Uterus (tissue), 4 donors: ENCODE measurements at regions of chr1 and their contacts with region 1.

Region 1: GRCh38 chr1:7752512-7753417 is 18.3 kb upstream of the VAMP3 start:
- DNase-seq: peak; percentile 60 to 70
- H3K4me3 ChIP-seq: peak overlapping the region in 1 of 2 donors; percentile 15
- H3K27ac ChIP-seq: peak overlapping the region in 1 of 2 donors; percentile 46
- H3K4me1 ChIP-seq: no peaks in the 10 kb centered on the region
- H3K27me3 ChIP-seq: no peaks in the 10 kb centered on the region
- CTCF ChIP-seq: peak; percentile 75 to 91 (median 80)
- POLR2A ChIP-seq: no peak

Region 2: DNA sequence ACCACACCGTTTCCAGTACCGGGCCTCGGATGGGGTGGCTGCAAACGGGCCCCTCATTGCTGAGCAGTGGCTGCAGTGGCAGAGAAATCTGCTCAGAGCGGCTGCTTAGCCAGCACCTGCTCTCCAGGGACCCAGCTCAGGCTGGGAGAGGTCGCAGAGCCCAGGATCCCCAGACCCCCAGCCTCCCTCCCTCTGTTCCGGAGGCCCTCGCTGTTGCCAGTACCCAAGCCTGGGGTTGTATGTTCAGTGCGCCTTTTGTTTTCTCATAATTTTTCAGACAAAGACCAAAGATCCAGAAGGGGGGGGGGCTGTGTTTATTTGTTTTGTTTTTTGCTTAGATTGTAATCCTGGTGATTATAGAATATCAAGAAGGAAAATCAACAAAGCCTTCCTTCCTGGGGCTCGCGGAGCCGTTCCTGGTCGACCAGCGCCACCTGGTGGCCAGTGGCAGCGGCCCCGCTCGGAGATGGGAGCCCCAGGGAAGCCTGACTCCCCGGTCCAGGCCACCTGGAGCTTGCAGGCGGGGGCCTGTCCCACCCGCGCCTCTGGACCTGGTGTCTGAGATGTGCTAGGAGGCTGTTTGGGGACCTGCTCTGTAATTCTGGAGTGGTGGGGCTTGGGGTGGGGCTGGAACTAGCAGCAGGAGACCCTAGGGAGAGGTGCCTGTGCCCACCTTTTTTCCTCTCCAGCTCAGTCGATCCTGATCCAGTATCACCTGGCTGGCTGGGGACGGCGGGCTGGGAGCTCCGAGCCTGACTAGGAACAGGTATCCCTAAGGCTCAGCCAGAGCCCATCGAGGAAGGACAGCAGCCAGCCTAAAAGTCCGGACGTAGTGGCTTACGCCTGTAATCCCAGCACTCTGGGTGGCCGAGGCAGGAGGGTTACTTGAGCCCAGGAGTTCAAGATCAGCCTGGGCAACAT is 105.5 kb before region 1 on chr1:
- intact Hi-C with region 1: no loop called
- DNase-seq: peak; percentile 44 to 64
- H3K4me3 ChIP-seq: no peak overlapping the region
- H3K27ac ChIP-seq: peak overlapping the region in 1 of 2 donors; percentile 70
- H3K4me1 ChIP-seq: no peaks in the 10 kb centered on the region
- H3K27me3 ChIP-seq: no peaks in the 10 kb centered on the region
- CTCF ChIP-seq: peak; percentile 88 to 98 (median 94)
- POLR2A ChIP-seq: no peak

Region 3: DNA sequence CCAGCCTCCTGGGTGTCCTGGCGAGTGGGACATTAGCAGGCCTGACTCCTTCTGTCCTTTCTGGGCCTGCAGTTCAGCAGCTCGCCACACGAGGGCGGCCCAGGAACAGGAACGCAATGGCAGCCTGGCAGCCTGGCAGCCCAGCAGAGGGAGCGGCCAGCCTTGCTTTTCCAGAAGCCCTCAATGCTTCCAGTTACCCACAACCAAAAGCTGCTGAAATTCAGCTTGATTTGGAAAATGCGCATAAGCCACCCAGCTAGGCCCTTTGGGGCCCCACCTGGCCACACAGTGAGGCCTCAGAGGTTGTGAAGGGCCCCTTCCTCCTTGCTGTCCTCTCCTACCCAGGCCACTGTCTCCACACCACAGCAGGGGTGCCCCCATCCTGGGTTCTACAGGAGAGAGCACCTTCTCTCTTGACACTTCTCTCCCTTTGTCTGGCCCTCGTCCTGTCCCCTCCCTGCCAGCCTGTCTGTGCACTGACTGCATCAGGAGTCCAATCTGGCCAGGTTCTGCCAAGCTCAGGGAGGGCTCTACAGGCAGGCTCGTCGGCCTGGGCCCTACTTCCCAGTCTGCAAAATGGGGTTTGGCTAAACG is 85.0 kb before region 1 on chr1:
- intact Hi-C with region 1: loop called (anchors 5 kb)
- DNase-seq: peak; percentile 82 to 87
- H3K4me3 ChIP-seq: no peak overlapping the region
- H3K27ac ChIP-seq: no peak overlapping the region
- H3K4me1 ChIP-seq: no peaks in the 10 kb centered on the region
- H3K27me3 ChIP-seq: no peaks in the 10 kb centered on the region
- CTCF ChIP-seq: peak; percentile 99 to 100 (median 100)
- POLR2A ChIP-seq: no peak

Region 4: GRCh38 chr1:7827126-7827955 is 74.6 kb after region 1 on chr1:
- intact Hi-C with region 1: no loop called
- DNase-seq: no peak
- H3K4me3 ChIP-seq: peak overlapping the region in 1 of 2 donors; percentile 8
- H3K27ac ChIP-seq: no peak overlapping the region
- H3K4me1 ChIP-seq: no peaks in the 10 kb centered on the region
- H3K27me3 ChIP-seq: no peaks in the 10 kb centered on the region
- CTCF ChIP-seq: no peak
- POLR2A ChIP-seq: no peak